ENCODE measurements at regions of chr13 and their contacts with region 1.

Region 1: DNA sequence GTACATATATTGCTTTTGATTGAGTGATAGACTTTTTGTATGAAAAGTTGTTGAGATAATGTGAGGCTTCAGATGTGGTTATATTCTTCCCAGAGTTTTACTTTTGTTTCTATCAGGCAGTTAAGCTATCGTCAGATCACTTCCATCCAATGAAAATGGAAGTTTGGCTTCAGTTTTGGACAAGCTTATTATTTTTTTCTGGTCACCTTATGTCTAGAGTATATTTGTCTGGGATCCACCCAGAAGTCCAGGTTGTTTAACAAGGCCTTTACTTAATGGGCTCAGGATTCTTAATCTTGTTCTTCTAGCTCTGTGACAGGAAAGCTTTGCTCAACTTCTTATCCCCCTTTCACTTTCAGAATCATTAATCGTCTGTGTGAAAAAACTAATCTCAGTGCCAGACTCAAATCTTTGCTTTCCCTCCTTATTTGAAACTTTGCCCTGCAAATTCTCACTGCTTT is 150.9 kb downstream of the PDS5B start:
- DNase-seq: peak; percentile 30

Region 2: DNA sequence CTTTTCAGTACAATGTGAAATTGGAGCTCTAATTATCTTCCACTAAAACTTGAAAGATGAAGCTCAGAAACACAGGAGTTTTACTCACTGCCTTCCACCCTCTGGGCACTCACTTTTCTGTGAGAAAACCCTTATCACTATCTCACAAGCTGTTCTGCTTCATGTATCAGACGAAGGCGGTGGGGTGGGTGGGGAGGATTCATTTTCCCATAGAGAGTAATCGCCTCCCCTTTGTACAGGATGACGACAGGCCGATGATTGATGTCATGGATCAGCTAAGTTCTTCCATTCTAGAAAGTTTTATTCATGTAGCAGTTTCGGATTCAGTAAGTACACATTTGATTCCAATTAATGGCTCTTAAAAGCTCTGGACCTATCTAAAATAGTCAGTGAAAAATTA is 561.8 kb before region 1 on chr13:
- in situ Hi-C with region 1: no loop called
- DNase-seq: no peak

Region 3: GRCh38 chr13:32911506-32911905 is 174.4 kb after region 1 on chr13:
- in situ Hi-C with region 1: loop called (anchors 25 kb)
- DNase-seq: peak; percentile 70

Measured in ACHN (cell line).